Breast epithelium (tissue), 4 donors: ENCODE measurements at regions of chr1 and their contacts with region 1.

Region 1: DNA sequence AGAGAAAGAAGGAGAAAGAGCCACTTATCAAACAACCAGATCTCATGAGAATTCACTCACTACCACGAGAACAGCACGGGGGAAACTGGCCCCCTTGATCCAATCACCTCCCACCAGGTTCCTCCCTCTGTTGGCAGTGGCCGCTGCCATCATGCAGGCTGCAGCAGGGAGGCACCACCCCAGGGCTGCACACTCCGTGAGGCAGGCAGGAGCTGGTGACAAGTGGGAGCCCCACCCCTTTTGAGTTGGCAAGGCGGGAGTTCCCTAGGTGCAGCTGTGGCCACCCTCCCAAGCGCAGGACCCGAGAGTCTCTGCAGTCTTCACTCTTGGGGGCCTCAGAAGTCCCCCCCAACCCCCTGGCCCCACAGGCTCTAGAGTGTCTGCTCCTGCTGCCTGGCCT is 83.9 kb upstream of the GJB5 start:
- DNase-seq: no peak
- H3K4me3 ChIP-seq: no peak overlapping the region
- H3K27ac ChIP-seq: no peak overlapping the region
- H3K4me1 ChIP-seq: no peaks in the 10 kb centered on the region
- H3K27me3 ChIP-seq: peaks cover 0 to 3% of the 10 kb centered on the region in 2 donors
- CTCF ChIP-seq: no peak
- POLR2A ChIP-seq: no peak

Region 2: DNA sequence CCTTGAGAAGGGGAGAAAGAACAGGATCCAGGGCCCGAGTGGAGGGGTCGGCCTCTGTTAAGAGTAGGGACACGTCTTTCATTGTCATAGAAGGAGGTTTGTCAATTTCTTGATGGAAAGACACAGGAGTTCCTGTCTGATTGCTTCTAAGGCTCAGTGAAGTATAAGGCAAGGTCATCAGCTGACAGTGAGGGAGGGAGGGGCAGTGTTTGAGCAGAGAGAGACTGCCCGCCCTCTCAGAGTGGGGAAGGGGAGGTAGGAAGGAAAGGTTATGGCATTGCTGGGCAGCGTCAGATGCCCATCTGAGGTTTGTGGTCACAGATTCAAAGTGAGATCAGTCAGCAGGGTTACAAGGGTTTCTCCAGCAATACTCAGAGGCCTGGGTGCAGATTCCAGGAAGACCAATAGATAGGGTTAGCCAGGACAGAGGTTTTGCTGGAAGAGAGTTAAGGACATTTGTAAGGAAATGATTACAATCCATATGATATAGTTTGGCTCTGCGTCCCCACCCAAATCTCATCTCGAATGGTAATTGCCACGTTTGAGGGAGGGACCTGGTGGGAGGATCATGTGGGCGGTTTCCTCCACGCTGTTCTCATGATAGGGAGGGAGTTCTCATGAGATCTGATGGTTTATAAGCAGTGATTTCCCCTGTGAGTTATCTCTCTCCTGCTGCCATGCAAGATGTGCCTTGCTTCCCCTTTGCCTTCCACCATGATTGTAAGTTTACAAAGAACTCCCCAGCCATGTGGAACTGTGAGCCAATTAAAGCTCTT is 43.3 kb before region 1 on chr1:
- intact Hi-C with region 1: loop called (anchors 1 kb)
- DNase-seq: no peak
- H3K4me3 ChIP-seq: no peak overlapping the region
- H3K27ac ChIP-seq: no peak overlapping the region
- H3K4me1 ChIP-seq: no peaks in the 10 kb centered on the region
- H3K27me3 ChIP-seq: peaks cover 0 to 2% of the 10 kb centered on the region in 2 donors
- CTCF ChIP-seq: no peak
- POLR2A ChIP-seq: no peak

Region 3: DNA sequence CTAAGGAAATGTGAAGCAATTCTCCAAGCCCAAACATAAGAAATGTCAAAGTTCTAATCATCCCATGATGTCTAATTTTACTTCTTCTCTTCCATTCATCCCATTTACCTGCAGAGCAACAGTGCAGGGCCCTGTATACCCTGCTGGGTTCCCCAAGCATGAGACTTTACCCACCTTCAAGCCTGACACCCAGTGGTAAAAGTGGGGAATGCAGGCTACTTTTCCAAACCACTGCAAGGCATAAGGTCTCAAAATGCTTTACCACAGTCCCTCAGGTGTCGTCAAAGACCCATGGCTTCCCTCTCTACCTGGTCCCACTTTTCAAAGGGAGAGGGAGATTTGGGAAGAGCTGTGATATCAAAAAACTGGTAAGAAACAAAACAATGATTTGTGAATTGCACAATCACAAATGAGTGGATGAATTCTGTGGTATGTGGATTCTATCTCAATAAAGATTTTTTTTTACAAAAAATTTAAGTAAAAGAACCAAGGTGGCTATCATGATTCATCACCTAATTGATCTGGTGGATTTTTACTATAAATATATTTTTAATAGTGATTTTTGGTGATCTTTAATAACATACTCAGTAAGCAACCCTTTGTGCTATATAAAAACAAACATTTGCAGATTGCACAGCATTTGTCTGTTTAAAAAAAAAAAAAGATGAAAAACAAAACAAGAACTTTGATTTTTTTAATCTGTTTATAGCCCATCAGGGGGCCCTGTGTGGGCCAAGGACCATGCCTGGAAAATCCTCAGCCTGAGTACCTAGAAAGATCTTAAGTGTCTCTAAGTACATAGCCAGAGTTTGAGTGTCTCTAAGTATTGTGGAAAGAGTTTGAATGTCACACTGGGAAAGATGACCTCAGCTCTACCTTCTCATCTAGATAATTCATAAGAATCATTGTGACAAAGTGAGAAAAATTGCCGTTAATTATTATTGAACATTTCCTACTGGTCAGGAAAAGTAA is 10.8 kb after region 1 on chr1:
- intact Hi-C with region 1: loop called (anchors 1 kb)
- DNase-seq: peak in 1 of 2 donors; percentile 21
- H3K4me3 ChIP-seq: no peak overlapping the region
- H3K27ac ChIP-seq: no peak overlapping the region
- H3K4me1 ChIP-seq: no peaks in the 10 kb centered on the region
- H3K27me3 ChIP-seq: no peaks in the 10 kb centered on the region
- CTCF ChIP-seq: peak; percentile 43 to 62 (median 60)
- POLR2A ChIP-seq: no peak